CD4-positive, alpha-beta T cell (primary cell): ENCODE measurements at regions of chr7 and their contacts with region 1.

Region 1: DNA sequence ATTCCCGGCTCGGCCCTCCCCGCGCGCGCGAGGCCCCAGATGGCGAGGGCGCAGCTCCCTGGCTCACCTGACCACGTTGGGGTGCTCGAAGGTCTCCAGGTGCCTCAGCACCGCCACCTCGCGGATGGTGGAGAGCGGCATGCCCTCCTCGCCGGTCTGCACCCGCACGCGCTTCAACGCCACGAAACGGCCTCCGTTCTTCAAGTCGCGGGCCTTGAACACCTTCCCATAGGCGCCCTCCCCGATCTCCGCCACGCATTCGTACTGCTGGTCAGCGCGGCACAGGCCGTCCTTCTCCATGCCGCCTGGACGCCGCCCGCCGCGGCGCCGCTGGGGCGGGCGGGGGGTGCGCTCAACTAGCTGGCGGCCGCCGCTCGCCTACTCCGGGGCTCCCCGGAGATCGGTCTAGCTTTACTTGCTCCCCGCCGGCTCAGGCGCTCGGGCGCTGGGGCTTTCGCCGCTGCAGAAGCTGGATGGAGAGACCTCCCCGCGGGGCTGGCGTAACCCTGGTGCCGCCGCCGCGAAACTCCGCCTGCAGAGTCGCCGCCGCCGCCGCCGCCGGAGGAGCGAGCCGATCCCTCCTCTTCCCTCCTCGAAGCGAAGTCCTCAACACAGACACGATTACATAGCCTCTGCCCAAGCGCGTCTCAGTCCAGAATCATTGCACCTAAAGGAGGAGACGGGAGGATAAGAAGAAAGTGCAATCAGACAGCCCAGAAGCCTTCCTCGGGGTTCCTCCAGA is 3.2 kb downstream of the CDK6 start:
- DNase-seq: peak; percentile 78 to 94 (median 86)
- ATAC-seq: peak; percentile 76
- H3K4me3 ChIP-seq: peak overlapping the region; percentile 92
- H3K4me3 Mint-ChIP-seq: peak overlapping the region; percentile 96
- H3K27ac ChIP-seq: peak overlapping the region; percentile 67 to 76
- H3K27ac Mint-ChIP-seq: peak overlapping the region; percentile 85
- H3K4me1 ChIP-seq: peaks cover 45% of the 10 kb centered on the region
- H3K4me1 Mint-ChIP-seq: peaks cover 62% of the 10 kb centered on the region
- H3K27me3 ChIP-seq: no peaks in the 10 kb centered on the region
- H3K27me3 Mint-ChIP-seq: peaks cover 8% of the 10 kb centered on the region
- CTCF ChIP-seq: peak; percentile 77

Region 2: DNA sequence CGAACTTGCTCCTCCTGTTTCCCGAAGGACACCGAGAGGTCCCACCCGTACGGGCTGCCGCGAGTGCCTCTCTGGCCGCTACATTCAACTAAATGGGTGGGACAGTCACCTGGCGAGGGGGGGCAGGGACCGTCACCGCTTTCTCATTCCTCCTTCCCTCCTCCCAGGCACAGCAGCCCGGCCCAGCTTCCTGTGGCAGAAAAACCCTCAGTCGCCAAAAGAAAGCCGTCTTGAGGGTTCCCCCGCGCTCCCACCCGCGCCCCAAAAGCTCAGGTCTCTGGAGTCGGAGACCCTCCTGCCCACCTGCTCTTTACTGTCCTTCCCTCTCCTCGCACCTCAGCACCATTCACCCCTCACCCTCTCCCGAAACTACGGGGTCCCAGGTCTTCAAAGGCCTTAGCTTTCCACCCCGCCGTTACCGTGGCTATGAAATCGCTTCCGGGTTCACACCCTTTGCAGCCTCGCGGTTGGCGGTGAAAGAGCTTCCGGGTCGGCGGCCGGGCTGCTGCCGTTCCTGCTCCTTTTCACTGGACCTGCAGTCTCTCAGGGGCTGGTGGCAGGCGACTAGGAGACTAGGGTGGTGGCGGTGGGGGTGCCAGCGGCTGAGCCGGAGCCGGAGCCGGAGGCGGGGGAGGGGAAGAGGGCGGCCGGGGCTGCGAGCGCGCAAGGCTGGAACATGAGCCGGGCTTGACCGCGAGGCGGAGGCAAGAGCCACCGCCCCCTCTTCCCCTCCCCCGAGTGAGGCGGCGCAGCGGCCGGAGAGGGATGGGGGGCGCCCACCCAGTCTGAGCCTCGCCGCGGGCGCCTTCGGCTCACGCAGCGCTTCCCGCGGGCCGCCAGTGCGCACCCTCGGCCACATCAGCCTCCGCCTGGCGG is 587.5 kb before region 1 on chr7 and contains the starts of genes ANKIB1 and KRIT1:
- CTCF ChIA-PET with region 1: no interaction called
- POLR2A ChIA-PET with region 1: no interaction called
- intact Hi-C with region 1: loop called in 1 of 2 experiments (anchors 10 kb)
- DNase-seq: peak; percentile 76 to 93 (median 81)
- ATAC-seq: peak; percentile 78
- H3K4me3 ChIP-seq: peak within 1 kb of the TSS; percentile 87
- H3K4me3 Mint-ChIP-seq: peak within 1 kb of the TSS; percentile 97
- H3K27ac ChIP-seq: peak within 1 kb of the TSS; percentile 86 to 96
- H3K27ac Mint-ChIP-seq: peak within 1 kb of the TSS; percentile 99
- H3K4me1 ChIP-seq: peaks cover 17% of the 10 kb centered on the region
- H3K4me1 Mint-ChIP-seq: peaks cover 61% of the 10 kb centered on the region
- H3K27me3 ChIP-seq: no peaks in the 10 kb centered on the region
- H3K27me3 Mint-ChIP-seq: no peaks in the 10 kb centered on the region
- CTCF ChIP-seq: no peak
- total RNA-seq, gene ANKIB1: 60.0 to 66.9 TPM
- total RNA-seq, gene KRIT1: 28.6 to 28.7 TPM

Region 3: GRCh38 chr7:92621026-92621540 is 212.1 kb before region 1 on chr7:
- CTCF ChIA-PET with region 1: interaction called, 58 read pairs
- POLR2A ChIA-PET with region 1: interaction called, 10 read pairs
- intact Hi-C with region 1: loop called (anchors 1 to 2 kb)
- DNase-seq: peak; percentile 55 to 91 (median 72)
- ATAC-seq: peak; percentile 92
- H3K4me3 ChIP-seq: no peak overlapping the region
- H3K4me3 Mint-ChIP-seq: peak overlapping the region; percentile 1
- H3K27ac ChIP-seq: peak overlapping the region in 1 of 2 donors; percentile 25
- H3K27ac Mint-ChIP-seq: peak overlapping the region; percentile 18
- H3K4me1 ChIP-seq: peaks cover 8% of the 10 kb centered on the region
- H3K4me1 Mint-ChIP-seq: peaks cover 18% of the 10 kb centered on the region
- H3K27me3 ChIP-seq: no peaks in the 10 kb centered on the region
- H3K27me3 Mint-ChIP-seq: no peaks in the 10 kb centered on the region
- CTCF ChIP-seq: peak; percentile 85

Region 4: GRCh38 chr7:92717993-92718716 is 115.0 kb before region 1 on chr7:
- CTCF ChIA-PET with region 1: interaction called, 13 read pairs
- POLR2A ChIA-PET with region 1: interaction called, 3 read pairs
- intact Hi-C with region 1: loop called in 1 of 2 experiments (anchors 10 kb)
- DNase-seq: peak in 13 of 14 experiments; percentile 8 to 82 (median 19)
- ATAC-seq: peak; percentile 90
- H3K4me3 ChIP-seq: peak overlapping the region; percentile 50
- H3K4me3 Mint-ChIP-seq: peak overlapping the region; percentile 89
- H3K27ac ChIP-seq: no peak overlapping the region
- H3K27ac Mint-ChIP-seq: peak overlapping the region; percentile 77
- H3K4me1 ChIP-seq: peaks cover 13% of the 10 kb centered on the region
- H3K4me1 Mint-ChIP-seq: peaks cover 25% of the 10 kb centered on the region
- H3K27me3 ChIP-seq: no peaks in the 10 kb centered on the region
- H3K27me3 Mint-ChIP-seq: no peaks in the 10 kb centered on the region
- CTCF ChIP-seq: no peak

Region 5: DNA sequence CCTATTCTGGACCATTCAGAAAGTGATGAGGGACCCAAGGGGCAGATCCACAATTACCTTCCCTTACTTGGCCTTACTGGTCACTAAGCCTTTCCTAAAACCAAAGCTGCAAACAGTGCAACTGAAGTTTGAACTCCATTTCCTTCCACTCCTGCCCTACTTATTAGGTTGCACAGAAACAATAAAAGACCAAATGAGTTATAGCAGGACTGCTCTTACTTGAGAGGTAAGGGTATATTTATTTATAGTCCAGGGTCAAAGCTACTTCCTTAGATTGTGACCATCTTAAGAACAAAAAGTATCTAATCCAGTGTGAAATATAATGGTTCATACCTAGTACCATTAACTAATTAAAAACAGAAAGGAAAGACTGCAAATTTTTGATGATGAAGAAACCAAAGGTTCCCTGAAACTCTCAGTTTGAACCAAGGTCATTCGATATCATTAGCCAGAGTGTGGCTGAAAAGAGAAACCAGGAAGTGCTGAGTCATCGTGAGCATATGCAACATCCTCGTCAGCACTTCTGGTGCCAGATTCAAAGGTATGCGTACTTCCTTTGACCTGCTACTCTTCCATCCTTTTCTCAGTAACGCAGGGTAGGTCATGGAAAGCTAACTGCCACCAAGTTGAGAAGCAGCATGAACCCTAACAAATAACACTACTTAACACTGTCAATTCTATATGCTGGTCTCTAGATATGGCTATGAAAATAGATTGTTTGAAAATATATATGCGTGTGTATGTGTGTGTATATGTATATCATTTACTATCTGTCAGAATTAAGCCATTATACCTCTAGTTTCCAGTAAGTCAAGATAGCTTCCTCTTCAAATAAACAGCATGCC is 23.6 kb before region 1 on chr7:
- CTCF ChIA-PET with region 1: interaction called, 22 read pairs
- POLR2A ChIA-PET with region 1: interaction called, 8 read pairs
- intact Hi-C with region 1: loop called in 1 of 2 experiments (anchors 2 kb)
- DNase-seq: peak in 11 of 14 experiments; percentile 3 to 90 (median 36)
- ATAC-seq: peak; percentile 70
- H3K4me3 ChIP-seq: peak overlapping the region; percentile 0
- H3K4me3 Mint-ChIP-seq: peak overlapping the region; percentile 62
- H3K27ac ChIP-seq: peak overlapping the region in 1 of 2 donors; percentile 39
- H3K27ac Mint-ChIP-seq: peak overlapping the region; percentile 62
- H3K4me1 ChIP-seq: peaks cover 5% of the 10 kb centered on the region
- H3K4me1 Mint-ChIP-seq: peaks cover 41% of the 10 kb centered on the region
- H3K27me3 ChIP-seq: no peaks in the 10 kb centered on the region
- H3K27me3 Mint-ChIP-seq: no peaks in the 10 kb centered on the region
- CTCF ChIP-seq: no peak

Region 6: GRCh38 chr7:92884218-92884617 is 51.0 kb after region 1 on chr7:
- CTCF ChIA-PET with region 1: no interaction called
- POLR2A ChIA-PET with region 1: no interaction called
- intact Hi-C with region 1: no loop called
- DNase-seq: no peak
- ATAC-seq: no peak
- H3K4me3 ChIP-seq: no peak overlapping the region
- H3K4me3 Mint-ChIP-seq: no peak overlapping the region
- H3K27ac ChIP-seq: no peak overlapping the region
- H3K27ac Mint-ChIP-seq: no peak overlapping the region
- H3K4me1 ChIP-seq: peaks cover 6% of the 10 kb centered on the region
- H3K4me1 Mint-ChIP-seq: peaks cover 7% of the 10 kb centered on the region
- H3K27me3 ChIP-seq: no peaks in the 10 kb centered on the region
- H3K27me3 Mint-ChIP-seq: no peaks in the 10 kb centered on the region
- CTCF ChIP-seq: no peak

Region 7: DNA sequence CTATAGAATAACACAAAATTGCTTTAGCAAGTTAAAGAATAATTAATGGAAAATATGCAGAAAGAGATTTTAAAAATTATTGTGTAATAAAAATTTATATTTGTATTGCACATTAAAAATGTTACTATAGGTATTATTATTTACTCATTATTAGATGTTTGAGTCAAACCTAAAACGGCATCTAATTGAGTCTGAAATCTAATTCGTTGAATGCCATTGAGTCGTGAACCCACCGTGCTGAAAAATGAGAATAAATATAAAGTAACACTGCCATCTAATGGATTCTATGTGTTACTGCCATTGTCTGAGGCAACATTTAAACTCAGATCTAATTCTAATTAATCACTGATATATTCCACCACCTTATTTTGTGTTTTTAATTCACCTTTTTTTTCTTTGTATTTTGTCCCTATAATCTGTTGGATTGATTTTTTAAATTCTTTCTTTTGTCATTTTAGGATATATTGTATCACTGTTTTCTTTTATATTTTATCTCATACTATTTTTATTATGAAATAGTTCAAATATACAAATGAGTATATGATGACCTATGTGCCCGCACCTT is 222.4 kb after region 1 on chr7:
- CTCF ChIA-PET with region 1: no interaction called
- POLR2A ChIA-PET with region 1: no interaction called
- intact Hi-C with region 1: loop called (anchors 10 kb)
- DNase-seq: peak in 4 of 14 experiments; percentile 7 to 66 (median 62)
- ATAC-seq: peak; percentile 76
- H3K4me3 ChIP-seq: no peak overlapping the region
- H3K4me3 Mint-ChIP-seq: no peak overlapping the region
- H3K27ac ChIP-seq: no peak overlapping the region
- H3K27ac Mint-ChIP-seq: no peak overlapping the region
- H3K4me1 ChIP-seq: no peaks in the 10 kb centered on the region
- H3K4me1 Mint-ChIP-seq: no peaks in the 10 kb centered on the region
- H3K27me3 ChIP-seq: peaks cover 0 to 5% of the 10 kb centered on the region in 2 experiments
- H3K27me3 Mint-ChIP-seq: no peaks in the 10 kb centered on the region
- CTCF ChIP-seq: peak; percentile 93